OCI-LY7 (cell line): ENCODE measurements at regions of chr15 and their contacts with region 1.

Region 1: DNA sequence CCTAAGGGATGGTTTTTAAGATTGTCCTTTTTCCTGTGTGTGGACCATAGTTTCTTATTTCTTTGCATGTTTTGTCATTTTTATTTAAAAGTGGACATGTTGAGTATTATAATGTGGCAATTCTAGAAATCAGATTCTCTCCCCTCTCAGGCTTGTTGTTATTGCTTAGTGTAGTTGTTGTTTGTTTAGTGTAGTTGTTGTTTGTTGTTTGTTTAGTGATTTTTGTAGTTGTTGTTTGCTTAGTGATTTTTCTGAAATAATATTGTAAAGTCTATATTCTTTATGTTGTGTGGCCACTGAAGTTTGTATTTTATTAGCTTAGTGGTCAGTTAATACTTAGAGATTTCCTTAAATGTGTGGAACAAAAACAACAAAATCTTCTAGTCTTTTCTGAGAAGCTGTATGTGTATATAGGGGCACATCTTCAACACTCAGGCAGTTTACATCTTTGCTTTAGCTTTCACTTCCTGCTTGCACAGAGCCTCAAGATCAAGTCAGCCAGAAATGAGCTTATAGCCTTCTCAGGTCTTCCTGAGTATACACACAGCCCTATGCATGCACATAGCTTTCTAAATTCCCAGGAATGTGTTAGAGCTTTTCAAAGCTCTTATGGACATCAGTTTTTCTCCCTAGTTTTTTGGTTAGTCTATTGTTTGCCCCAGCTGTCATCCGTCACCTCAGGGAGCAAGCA is 22.3 kb upstream of the MTMR10 start:
- DNase-seq: peak; percentile 81
- H3K4me3 ChIP-seq: no peak overlapping the region
- H3K27ac ChIP-seq: peak overlapping the region; percentile 21
- H3K4me1 ChIP-seq: peaks cover 17% of the 10 kb centered on the region
- CTCF ChIP-seq: no peak

Region 2: GRCh38 chr15:31024330-31024729 is 10.6 kb after region 1 on chr15:
- CTCF ChIA-PET with region 1: interaction called, 3 read pairs
- POLR2A ChIA-PET with region 1: interaction called, 21 read pairs
- intact Hi-C with region 1: no loop called
- DNase-seq: no peak
- H3K4me3 ChIP-seq: no peak overlapping the region
- H3K27ac ChIP-seq: no peak overlapping the region
- H3K4me1 ChIP-seq: no peaks in the 10 kb centered on the region
- CTCF ChIP-seq: no peak

Region 3: GRCh38 chr15:31039981-31040380 is 26.3 kb after region 1 on chr15:
- CTCF ChIA-PET with region 1: no interaction called
- POLR2A ChIA-PET with region 1: interaction called, 10 read pairs
- intact Hi-C with region 1: no loop called
- DNase-seq: no peak
- H3K4me3 ChIP-seq: no peak overlapping the region
- H3K27ac ChIP-seq: no peak overlapping the region
- H3K4me1 ChIP-seq: no peaks in the 10 kb centered on the region
- CTCF ChIP-seq: no peak